Ascending aorta (tissue), 2 donors: ENCODE measurements at regions of chr2 and their contacts with region 1.

Region 1: DNA sequence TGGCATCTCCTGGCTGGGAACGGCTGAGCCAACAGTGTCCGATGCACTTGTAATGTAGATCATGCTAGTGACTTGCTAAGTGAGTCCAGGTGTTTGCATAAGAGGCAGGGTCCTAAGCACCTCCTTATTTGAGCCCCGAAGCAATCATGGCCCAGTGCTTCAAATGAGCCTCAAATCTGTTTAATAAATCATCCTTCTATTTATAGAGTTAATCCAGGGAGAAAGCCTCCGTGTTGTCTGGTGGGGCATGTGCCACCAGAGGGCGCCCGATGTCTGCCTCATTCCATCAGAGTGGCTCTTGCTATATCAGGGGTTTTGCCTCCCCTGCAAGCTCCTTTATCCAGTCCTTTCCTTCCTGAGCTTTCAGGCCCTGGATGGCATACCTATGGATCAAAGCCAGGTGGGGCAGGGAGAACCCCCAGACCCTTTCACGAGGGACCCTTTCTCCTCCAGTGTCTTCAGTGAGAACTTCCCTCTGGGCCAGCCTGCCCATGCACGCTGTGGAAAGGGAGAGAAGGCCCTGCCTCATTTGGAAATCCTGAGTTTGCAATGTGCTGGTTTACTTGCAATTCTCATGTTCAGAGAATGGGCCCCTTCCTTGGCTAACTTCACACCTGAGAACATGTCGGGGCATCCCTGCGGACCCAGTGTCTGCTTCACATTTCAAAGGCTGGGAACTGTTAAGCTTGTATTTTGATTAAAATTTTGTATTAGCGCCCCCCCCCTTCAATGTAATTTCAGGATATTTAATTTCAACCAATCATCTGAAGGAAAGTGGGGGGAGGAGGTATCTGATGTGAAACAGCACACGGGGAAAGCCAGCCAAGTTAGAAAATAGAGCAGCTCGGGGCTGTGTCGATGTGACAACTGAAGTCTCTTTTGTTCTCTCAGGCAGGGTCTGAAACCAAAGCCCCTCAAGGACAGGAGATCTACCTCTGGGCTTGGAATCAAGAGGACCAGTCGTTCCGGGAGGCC is 39.7 kb downstream of the RDH14 start:
- DNase-seq: peak; percentile 19 to 95
- H3K4me3 ChIP-seq: peak overlapping the region in 1 of 2 donors; percentile 17
- H3K27ac ChIP-seq: peak overlapping the region; percentile 53 to 66
- H3K4me1 ChIP-seq: peaks cover 3 to 28% of the 10 kb centered on the region in 2 donors
- H3K27me3 ChIP-seq: no peaks in the 10 kb centered on the region
- CTCF ChIP-seq: peak; percentile 84 to 94 (median 91)

Region 2: DNA sequence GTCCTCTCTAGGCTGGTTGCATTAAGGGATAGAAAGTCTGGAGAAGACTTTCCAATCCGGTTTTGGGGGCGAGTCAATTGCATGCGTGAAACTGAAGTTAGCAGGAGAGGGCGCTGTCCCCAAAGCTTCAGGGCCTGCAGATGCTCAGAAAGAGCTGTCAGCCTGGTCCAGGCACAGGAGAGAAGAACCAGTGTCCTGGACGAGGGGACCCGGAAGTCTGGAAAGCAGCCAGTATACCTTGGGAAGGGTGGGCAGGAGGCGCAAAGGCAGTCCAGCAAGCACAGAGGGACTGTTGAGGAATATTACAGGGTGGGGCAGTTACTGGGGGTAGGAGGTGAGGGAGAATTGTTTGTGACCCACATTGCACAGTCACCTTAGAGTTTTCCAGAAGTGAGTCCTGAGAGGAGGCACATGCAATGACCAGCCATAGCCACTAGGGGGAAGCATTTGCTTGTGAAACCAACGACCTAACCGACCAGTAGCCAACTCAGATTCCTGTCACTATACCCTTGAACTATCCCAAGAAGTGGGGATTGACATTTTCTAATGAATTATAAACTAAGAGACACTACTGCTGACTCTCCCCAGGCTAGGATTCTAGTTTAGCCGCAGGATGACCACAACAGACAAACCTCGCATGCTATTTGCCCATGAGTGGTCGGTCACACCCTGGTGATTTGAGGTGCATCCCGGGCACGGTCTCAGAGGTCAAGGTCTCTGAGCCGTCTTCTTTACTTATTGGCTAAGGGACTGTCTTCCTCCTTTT is 133.1 kb before region 1 on chr2:
- intact Hi-C with region 1: loop called (anchors 5 kb)
- DNase-seq: peak in 1 of 2 donors; percentile 92
- H3K4me3 ChIP-seq: no peak overlapping the region
- H3K27ac ChIP-seq: peak overlapping the region; percentile 44 to 46
- H3K4me1 ChIP-seq: peaks cover 0 to 3% of the 10 kb centered on the region in 2 donors
- H3K27me3 ChIP-seq: no peaks in the 10 kb centered on the region
- CTCF ChIP-seq: peak; percentile 66 to 90 (median 89)

Region 3: DNA sequence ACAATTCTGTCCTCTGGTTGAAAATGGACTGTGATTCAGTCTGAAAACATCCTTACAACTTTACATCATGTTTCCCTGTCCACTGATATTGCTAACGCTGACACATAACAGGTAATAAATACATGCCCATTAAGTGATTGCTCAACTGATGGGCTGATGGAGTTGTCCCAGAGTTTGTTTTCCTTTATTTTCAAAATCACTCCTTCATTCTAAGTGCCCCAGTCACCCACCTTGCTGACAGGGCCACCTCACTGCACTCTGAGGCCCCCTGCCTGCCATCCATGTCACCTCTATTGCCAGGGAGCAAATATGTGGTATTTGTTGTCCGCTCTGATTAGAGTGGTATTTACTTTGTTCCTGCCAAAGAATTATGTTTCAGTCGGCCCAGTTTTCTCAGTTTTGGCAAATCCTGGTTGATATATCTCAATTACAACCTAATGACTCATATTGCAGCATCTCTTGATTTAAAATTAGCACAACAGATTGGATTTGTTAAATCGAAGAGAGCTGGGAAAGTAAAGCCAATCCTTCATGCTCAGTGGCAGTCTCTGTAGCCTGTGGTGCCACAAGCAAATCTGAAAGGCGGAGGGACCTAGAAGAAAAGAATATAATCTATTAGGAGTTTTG is 65.4 kb before region 1 on chr2:
- intact Hi-C with region 1: loop called (anchors 5 kb)
- DNase-seq: peak in 1 of 2 donors; percentile 71
- H3K4me3 ChIP-seq: no peak overlapping the region
- H3K27ac ChIP-seq: peak overlapping the region; percentile 82 to 83
- H3K4me1 ChIP-seq: peaks cover 9 to 22% of the 10 kb centered on the region in 2 donors
- H3K27me3 ChIP-seq: no peaks in the 10 kb centered on the region
- CTCF ChIP-seq: peak in 2 of 3 experiments; percentile 43

Region 4: GRCh38 chr2:18708203-18708715 is 187.5 kb after region 1 on chr2:
- intact Hi-C with region 1: no loop called
- DNase-seq: no peak
- H3K4me3 ChIP-seq: no peak overlapping the region
- H3K27ac ChIP-seq: no peak overlapping the region
- H3K4me1 ChIP-seq: no peaks in the 10 kb centered on the region
- H3K27me3 ChIP-seq: no peaks in the 10 kb centered on the region
- CTCF ChIP-seq: no peak

Region 5: GRCh38 chr2:18741895-18742732 is 221.4 kb after region 1 on chr2:
- intact Hi-C with region 1: loop called (anchors 2 kb)
- DNase-seq: no peak
- H3K4me3 ChIP-seq: peak overlapping the region in 1 of 2 donors; percentile 33
- H3K27ac ChIP-seq: no peak overlapping the region
- H3K4me1 ChIP-seq: peaks cover 0 to 12% of the 10 kb centered on the region in 2 donors
- H3K27me3 ChIP-seq: no peaks in the 10 kb centered on the region
- CTCF ChIP-seq: peak in 2 of 3 experiments; percentile 30 to 55

Region 6: GRCh38 chr2:18903750-18904149 is 383.0 kb after region 1 on chr2:
- intact Hi-C with region 1: loop called (anchors 5 kb)
- DNase-seq: no peak
- H3K4me3 ChIP-seq: no peak overlapping the region
- H3K27ac ChIP-seq: no peak overlapping the region
- H3K4me1 ChIP-seq: peaks cover 9 to 23% of the 10 kb centered on the region in 2 donors
- H3K27me3 ChIP-seq: no peaks in the 10 kb centered on the region
- CTCF ChIP-seq: no peak

Region 7: DNA sequence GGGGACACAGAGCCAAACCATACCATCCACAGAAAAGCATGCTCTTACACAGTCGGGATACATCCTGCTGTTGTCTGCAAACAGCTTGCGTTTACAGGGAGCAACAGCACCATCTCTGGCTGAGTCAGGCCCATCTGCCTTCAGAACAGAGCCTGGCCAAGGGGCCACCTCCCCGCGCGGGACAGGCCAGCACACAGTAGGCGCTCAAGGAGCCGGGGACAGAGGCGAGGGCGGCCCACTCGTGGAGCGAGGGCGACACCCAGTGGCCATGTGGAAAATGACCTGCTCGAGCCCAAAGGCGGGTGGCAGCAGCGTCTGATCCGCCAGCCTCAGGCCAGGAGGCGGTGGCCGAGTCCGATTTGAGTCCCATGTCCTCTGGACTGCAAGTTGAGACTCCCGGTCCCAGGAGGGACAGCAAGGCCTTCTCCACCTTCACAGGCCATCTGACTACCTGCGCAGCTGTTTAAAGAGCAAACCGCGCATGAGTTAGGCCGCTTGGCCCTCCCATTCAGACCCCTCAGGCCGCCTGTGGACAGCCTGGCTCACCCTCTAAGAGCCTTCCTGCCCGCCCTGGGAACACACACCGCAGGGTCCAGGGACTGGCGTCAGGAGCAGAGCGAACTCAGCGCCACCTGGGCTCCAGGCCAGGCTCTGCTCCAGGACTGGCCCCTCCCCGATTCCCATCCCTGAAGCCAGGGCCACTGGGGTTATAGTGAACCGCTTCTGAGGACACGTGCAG is 1342.7 kb after region 1 on chr2:
- intact Hi-C with region 1: loop called (anchors 2 kb)
- DNase-seq: peak in 1 of 2 donors; percentile 89
- H3K4me3 ChIP-seq: peak overlapping the region in 1 of 2 donors; percentile 50
- H3K27ac ChIP-seq: peak overlapping the region; percentile 89 to 91
- H3K4me1 ChIP-seq: peaks cover 14 to 42% of the 10 kb centered on the region in 2 donors
- H3K27me3 ChIP-seq: no peaks in the 10 kb centered on the region
- CTCF ChIP-seq: peak; percentile 97 to 98 (median 97)